ENCODE measurements at regions of chrX and their contacts with region 1.

Region 1: DNA sequence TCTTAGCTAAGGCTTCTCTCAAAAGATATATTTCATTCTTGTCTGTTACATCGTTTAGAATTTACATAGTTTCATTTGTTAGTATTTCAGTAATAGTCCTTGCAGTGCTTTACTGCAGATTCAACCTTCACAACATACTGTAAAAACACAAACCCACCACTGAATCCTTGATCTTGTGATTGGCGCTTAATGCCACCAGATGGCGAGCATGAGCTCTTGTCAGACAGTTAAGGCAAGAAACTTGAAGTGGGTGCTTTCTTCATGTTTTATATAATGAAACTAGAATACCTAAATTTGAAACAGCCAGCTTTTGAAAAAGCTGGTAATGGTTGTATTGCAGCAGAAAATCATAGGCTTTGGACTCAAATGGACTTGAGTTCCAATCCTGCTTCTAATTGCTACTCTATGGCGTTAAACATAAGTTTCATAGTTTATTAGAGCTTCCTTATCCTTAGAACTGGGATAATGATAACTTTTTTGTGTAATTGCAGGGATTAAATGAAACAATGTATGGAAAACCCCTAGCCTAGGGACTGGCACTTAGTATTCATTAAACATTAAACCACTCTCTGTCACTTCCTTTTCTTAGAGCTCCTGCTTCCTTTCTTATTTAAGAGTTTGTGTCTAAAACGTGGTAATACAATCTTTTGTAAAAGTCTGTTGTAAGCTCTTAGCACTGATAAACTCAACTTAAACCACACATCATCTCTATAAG is 95.1 kb downstream of the USP9X start:
- H3K4me3 ChIP-seq: no peak overlapping the region
- H3K27ac ChIP-seq: no peak overlapping the region
- H3K4me1 ChIP-seq: no peaks in the 10 kb centered on the region
- CTCF ChIP-seq: no peak

Region 2: DNA sequence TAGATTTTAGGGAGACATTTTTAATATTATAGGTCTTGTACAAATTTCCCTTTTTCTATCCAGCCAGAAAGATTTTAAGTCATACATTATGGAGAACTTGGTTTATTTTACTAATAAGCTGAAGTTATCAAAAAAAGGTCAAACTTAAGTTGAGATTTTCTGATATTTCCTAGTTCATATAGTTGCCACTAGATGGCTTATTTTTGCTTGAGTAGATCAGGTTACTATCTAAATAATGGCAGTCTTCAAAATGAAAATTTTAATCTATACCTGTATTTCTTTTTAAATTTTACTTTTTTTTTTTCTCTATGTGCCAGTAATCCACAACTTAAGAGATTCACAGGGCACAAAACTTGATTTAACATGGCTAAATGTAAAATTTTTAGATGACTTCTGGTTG is 42.8 kb before region 1 on chrX:
- CTCF ChIA-PET with region 1: interaction called, 12 read pairs
- POLR2A ChIA-PET with region 1: no interaction called
- H3K4me3 ChIP-seq: no peak overlapping the region
- H3K27ac ChIP-seq: no peak overlapping the region
- H3K4me1 ChIP-seq: 0 out of 2 replicates have a peak, but pooled peaks cover 3% of the 10 kb centered on the region
- CTCF ChIP-seq: no peak

Region 3: GRCh38 chrX:41153448-41153847 is 26.9 kb before region 1 on chrX:
- CTCF ChIA-PET with region 1: interaction called, 13 read pairs
- POLR2A ChIA-PET with region 1: no interaction called
- H3K4me3 ChIP-seq: no peak overlapping the region
- H3K27ac ChIP-seq: no peak overlapping the region; the same call in 1 of the 2 replicates
- H3K4me1 ChIP-seq: peaks cover 4% of the 10 kb centered on the region; the same call in 1 of the 2 replicates
- CTCF ChIP-seq: no peak

Region 4: DNA sequence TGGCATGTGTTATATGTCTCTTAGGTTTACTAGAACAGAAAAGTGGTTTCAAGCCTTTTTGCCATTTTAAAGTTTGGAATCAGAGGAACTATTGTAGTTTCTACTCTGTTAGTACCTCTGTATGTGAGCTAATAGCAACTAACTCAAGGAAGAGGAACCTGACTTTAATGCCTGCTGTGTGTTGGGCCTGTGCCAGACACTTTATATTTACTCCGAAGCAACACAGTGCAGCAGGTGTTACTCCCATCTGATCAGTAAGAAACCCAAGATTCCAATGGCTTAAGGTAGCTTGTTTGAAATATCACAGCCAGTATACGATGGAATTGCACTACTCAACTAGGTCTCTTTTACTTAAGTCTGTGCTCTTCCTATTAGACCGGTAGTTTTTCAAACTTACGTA is 15.9 kb before region 1 on chrX:
- CTCF ChIA-PET with region 1: interaction called, 46 read pairs
- POLR2A ChIA-PET with region 1: interaction called, 4 read pairs
- H3K4me3 ChIP-seq: no peak overlapping the region
- H3K27ac ChIP-seq: no peak overlapping the region; the same call in 1 of the 2 replicates
- H3K4me1 ChIP-seq: peaks cover 13% of the 10 kb centered on the region
- CTCF ChIP-seq: no peak

Region 5: DNA sequence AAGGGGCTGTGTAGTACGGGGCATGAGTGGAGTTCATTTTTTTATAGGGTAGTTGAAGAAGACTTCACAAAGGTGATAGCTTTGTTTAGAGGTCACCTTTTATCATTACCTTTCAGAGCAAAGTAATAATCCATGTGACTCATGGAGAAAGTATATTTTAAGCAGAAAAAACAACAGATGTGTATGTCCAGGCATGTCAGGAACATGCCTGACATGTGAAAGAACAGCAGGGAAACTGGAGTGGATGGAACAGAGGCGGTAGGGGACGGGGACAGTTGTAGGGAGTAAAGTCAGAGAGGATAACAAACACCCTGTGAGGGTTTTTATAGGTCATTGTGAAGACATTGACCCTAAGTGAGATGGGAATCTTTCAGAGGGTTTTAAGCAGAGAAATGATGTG is 12.5 kb after region 1 on chrX:
- CTCF ChIA-PET with region 1: interaction called, 44 read pairs
- POLR2A ChIA-PET with region 1: interaction called, 6 read pairs
- H3K4me3 ChIP-seq: no peak overlapping the region
- H3K27ac ChIP-seq: peak overlapping the region; percentile 62
- H3K4me1 ChIP-seq: no peaks in the 10 kb centered on the region
- CTCF ChIP-seq: no peak

Region 6: GRCh38 chrX:41198406-41198805 is 18.1 kb after region 1 on chrX:
- CTCF ChIA-PET with region 1: interaction called, 44 read pairs
- POLR2A ChIA-PET with region 1: interaction called, 6 read pairs
- H3K4me3 ChIP-seq: no peak overlapping the region
- H3K27ac ChIP-seq: no peak overlapping the region
- H3K4me1 ChIP-seq: no peaks in the 10 kb centered on the region
- CTCF ChIP-seq: no peak

Region 7: DNA sequence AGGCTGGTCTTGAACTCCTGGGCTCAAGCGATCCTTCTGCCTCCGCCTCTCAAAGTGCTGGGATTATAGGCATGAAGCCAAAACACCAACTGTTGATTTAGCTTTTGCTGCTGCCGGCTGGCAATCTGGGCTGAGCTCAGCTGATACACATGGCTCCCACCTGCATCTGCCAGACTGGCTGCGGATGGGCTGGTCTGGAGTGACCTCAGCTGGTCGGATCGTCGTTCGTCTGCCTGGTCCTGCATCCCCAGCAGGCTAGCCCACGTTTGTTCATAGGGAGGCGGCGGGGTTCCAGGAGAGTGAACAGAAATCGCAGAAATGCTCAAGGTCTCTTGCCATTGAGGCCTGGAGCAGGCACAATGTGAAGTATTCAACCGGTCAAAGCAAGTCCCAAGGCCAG is 79.2 kb after region 1 on chrX:
- CTCF ChIA-PET with region 1: interaction called, 38 read pairs
- POLR2A ChIA-PET with region 1: no interaction called
- H3K4me3 ChIP-seq: no peak overlapping the region
- H3K27ac ChIP-seq: no peak overlapping the region
- H3K4me1 ChIP-seq: no peaks in the 10 kb centered on the region
- CTCF ChIP-seq: no peak

Measured in HEK293 (cell line).